Common myeloid progenitor, CD34-positive (primary cell): ENCODE measurements at regions of chr14 and their contacts with region 1.

Region 1: GRCh38 chr14:24366721-24367513 is 1.1 kb upstream of the NFATC4 start:
- DNase-seq: peak in 2 of 3 donors; percentile 34 to 48
- H3K4me3 ChIP-seq: peak overlapping the region in 6 of 7 experiments; percentile 23 to 69 (median 46)
- H3K27ac ChIP-seq: no peak overlapping the region
- H3K4me1 ChIP-seq: peaks cover 0 to 33% (median 32%) of the 10 kb centered on the region in 4 experiments
- H3K27me3 ChIP-seq: peaks cover 0 to 23% (median 6%) of the 10 kb centered on the region in 5 experiments

Region 2: GRCh38 chr14:24332268-24332993 is 34.5 kb before region 1 on chr14:
- CTCF ChIA-PET with region 1: interaction called, 40 read pairs
- POLR2A ChIA-PET with region 1: interaction called, 3 read pairs
- DNase-seq: peak; percentile 89 to 95 (median 94)
- H3K4me3 ChIP-seq: peak overlapping the region in 6 of 7 experiments; percentile 19 to 63 (median 30)
- H3K27ac ChIP-seq: no peak overlapping the region
- H3K4me1 ChIP-seq: peaks cover 15 to 71% (median 68%) of the 10 kb centered on the region in 4 experiments
- H3K27me3 ChIP-seq: peaks cover 0 to 34% (median 10%) of the 10 kb centered on the region in 5 experiments

Region 3: DNA sequence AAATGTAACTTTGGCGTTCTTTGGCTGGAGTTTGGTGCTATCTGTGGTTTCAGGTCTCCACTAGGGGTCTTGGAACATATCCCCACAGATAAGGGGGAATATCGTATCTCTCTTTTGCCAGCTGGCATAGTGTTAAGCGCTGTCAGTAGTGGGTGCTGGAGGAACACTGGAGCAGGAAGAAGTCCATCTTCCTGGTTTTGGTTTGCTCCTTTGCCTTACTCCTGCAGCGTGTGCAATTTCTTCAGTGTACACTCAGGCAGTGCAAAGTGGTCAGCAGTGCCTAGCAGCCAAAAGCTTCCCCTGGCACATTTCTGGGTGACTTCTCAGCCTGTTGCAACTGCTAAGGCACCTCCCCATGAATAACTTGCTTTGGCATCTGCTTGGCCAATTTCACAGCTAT is 15.4 kb before region 1 on chr14:
- CTCF ChIA-PET with region 1: interaction called, 10 read pairs
- POLR2A ChIA-PET with region 1: no interaction called
- DNase-seq: peak in 2 of 3 donors; percentile 33 to 47
- H3K4me3 ChIP-seq: no peak overlapping the region
- H3K27ac ChIP-seq: no peak overlapping the region
- H3K4me1 ChIP-seq: no peaks in the 10 kb centered on the region
- H3K27me3 ChIP-seq: peaks cover 0 to 2% (median 0%) of the 10 kb centered on the region in 5 experiments

Region 4: GRCh38 chr14:24392325-24393091 is 25.6 kb after region 1 on chr14:
- CTCF ChIA-PET with region 1: interaction called, 21 read pairs
- POLR2A ChIA-PET with region 1: interaction called, 3 read pairs
- DNase-seq: peak in 1 of 3 donors; percentile 24
- H3K4me3 ChIP-seq: no peak overlapping the region
- H3K27ac ChIP-seq: no peak overlapping the region
- H3K4me1 ChIP-seq: peaks cover 15 to 74% (median 62%) of the 10 kb centered on the region in 4 experiments
- H3K27me3 ChIP-seq: no peaks in the 10 kb centered on the region

Region 5: DNA sequence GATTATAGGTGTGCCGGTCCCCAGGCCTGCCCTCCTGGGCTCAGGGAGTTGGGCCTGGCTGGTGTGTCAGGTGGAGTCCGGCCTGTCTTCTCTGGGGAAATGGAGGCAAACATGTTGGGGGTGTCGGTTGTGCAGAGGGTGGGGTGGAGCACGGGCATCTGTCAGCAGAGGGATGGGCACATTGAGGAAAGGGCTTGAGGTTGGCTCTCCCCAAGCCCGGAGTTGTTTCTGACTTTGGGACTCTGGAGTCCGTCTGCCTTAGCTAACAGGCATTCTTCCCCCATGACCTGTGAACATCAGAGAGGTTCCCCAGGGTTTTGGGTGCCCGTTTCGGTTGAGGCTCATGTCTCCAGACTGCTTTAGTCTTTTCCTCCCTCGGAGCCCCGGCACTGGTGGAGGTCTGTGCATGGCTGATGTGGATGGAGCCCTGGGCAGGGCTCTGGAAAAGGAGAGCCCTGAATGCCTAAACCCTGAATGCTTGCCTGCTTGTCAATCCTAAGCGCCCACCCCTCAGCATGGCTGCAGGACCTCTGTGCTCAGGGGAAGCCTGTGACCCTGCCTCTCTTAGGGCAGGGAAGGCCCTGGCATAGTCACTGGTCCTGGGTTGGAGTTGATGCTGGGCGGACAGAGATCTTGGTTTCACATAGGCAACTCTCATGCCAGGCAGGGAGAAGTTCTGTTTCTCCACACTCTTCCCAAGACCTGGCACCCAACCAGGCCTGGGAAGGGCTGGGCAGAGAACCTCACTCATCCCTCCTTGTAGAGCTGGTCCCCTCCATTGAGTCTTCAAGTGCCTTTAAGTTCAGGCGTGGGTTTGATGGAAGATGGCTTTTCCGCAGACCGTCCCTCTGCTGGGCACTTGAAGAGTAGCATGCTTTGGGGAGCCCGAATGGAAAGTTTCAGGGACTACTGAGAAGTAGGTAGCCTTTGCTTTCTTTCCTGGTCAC is 44.8 kb after region 1 on chr14:
- CTCF ChIA-PET with region 1: interaction called, 81 read pairs
- POLR2A ChIA-PET with region 1: no interaction called
- DNase-seq: peak; percentile 64 to 78 (median 76)
- H3K4me3 ChIP-seq: no peak overlapping the region
- H3K27ac ChIP-seq: no peak overlapping the region
- H3K4me1 ChIP-seq: no peaks in the 10 kb centered on the region
- H3K27me3 ChIP-seq: no peaks in the 10 kb centered on the region

Region 6: DNA sequence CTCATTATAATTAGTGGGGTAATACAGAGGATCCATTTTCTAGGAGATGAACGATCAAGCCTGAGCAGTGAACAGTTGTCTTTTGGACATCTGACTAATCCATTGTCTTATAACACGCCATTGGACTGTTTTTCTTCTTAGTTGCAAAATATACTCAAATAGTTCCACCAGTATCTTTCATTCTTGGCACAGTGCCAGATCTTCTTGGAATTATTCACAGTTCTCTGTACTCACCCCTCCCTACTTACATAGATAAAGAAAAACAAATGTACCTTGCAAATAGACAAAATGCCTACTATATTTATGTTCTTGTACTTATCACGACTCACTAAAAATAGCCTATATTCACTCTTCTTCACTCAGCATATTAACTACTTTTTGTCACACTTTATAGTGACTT is 58.8 kb after region 1 on chr14:
- CTCF ChIA-PET with region 1: interaction called, 130 read pairs
- POLR2A ChIA-PET with region 1: interaction called, 7 read pairs
- DNase-seq: peak in 2 of 3 donors; percentile 40 to 47
- H3K4me3 ChIP-seq: no peak overlapping the region
- H3K27ac ChIP-seq: no peak overlapping the region
- H3K4me1 ChIP-seq: peaks cover 24 to 75% (median 63%) of the 10 kb centered on the region in 4 experiments
- H3K27me3 ChIP-seq: peaks cover 0 to 3% (median 0%) of the 10 kb centered on the region in 5 experiments

Region 7: DNA sequence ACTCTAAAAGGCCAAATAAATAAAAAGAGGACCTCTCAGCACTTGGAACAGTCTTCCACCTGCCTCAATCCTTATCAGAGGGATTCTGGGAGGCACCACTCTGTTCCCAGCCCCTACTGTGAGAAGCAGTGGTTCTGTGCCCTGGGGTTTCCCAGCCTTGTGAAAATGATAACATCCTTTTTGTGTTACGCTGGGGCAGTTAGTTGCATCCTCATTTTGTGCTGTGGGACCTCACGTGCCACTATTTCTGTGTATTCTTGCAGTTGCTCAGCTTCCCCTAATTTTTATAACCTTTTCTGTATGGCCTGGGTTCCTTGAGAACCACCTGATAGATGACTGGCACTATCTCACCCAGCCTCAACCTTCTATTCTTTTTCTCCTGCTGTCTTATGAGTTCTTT is 151.9 kb after region 1 on chr14:
- CTCF ChIA-PET with region 1: no interaction called
- POLR2A ChIA-PET with region 1: no interaction called
- DNase-seq: no peak
- H3K4me3 ChIP-seq: no peak overlapping the region
- H3K27ac ChIP-seq: no peak overlapping the region
- H3K4me1 ChIP-seq: no peaks in the 10 kb centered on the region
- H3K27me3 ChIP-seq: no peaks in the 10 kb centered on the region

Region 8: DNA sequence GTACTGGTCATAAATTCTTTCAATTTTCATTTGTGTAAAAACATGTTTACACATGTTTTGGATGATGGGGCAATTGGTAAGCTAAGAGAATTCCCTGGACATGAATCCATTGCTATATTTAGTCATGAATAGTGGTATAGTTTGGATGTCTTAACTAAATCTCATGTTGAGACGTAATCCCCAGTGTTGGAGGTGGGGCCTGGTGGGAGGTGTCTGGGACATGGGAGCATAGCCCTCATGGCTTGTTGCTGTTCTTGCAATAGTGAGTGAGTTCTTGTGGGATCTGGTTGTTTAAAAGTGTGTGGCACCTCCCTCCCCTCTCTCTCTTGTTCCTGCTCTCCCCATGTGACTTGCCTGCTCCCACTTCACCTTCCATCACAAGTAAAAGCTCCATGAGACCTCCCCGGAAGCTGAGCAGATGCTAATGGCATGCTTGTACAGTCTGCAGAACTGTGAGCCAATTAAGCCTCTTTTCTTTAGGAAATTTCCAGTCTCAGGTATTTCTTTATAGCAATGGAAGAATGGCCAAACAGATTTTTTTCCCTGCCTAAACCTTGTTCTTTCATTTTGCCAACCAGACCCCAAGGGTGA is 175.5 kb after region 1 on chr14:
- CTCF ChIA-PET with region 1: no interaction called
- POLR2A ChIA-PET with region 1: no interaction called
- DNase-seq: no peak
- H3K4me3 ChIP-seq: no peak overlapping the region
- H3K27ac ChIP-seq: no peak overlapping the region
- H3K4me1 ChIP-seq: no peaks in the 10 kb centered on the region
- H3K27me3 ChIP-seq: no peaks in the 10 kb centered on the region

Region 9: DNA sequence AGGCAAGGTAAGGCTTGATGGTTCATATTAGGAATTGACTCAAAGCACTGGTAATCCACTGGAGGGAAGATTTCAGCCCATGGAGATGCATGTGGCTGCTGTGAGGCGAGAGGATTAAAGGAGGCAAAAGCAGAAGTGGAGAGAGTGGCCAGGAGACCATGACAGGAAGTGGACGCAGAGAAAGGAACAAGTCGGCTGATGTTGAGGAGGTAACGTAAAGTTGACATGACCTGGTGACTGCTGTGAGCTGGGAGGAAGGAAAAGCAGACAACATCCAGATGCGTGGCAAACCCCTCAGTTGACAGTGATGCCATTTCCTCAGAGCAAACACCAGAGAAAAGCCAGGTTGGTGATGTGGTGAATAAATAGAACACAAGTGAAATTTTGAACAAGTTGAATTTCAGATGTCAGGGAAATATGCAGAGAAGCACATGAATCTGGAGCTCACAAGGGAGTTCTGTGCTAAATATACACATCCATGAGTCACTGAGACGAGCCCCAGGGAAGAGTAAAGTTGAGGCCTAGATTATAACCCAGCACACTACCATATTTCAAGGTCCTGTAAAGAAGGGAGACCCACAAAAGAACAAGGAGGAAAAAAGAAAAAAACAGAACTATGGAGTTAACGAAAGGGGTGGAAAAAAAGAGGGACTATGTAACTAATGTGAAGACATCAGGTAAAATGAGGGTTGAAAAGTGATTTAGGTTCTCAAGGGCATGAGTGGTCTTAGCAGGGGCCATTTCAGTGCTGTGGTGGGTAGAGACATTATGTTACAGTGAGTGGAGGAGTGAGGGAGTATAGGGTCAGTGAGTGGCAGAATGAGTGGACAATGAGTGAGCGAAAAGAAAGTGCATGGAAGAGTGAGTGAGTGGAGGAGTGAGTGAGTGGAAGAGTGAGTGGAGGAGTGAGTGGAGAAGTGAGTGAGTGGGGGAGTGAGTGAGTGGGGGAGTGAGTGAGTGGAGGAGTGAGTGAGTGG is 328.6 kb after region 1 on chr14:
- CTCF ChIA-PET with region 1: no interaction called
- POLR2A ChIA-PET with region 1: no interaction called
- DNase-seq: peak; percentile 44 to 95 (median 92)
- H3K4me3 ChIP-seq: peak overlapping the region in 1 of 7 experiments; percentile 29
- H3K27ac ChIP-seq: no peak overlapping the region
- H3K4me1 ChIP-seq: peaks cover 10 to 69% (median 21%) of the 10 kb centered on the region in 4 experiments
- H3K27me3 ChIP-seq: no peaks in the 10 kb centered on the region